PC-9 (cell line): ENCODE measurements at regions of chr12 and their contacts with region 1.

Region 1: DNA sequence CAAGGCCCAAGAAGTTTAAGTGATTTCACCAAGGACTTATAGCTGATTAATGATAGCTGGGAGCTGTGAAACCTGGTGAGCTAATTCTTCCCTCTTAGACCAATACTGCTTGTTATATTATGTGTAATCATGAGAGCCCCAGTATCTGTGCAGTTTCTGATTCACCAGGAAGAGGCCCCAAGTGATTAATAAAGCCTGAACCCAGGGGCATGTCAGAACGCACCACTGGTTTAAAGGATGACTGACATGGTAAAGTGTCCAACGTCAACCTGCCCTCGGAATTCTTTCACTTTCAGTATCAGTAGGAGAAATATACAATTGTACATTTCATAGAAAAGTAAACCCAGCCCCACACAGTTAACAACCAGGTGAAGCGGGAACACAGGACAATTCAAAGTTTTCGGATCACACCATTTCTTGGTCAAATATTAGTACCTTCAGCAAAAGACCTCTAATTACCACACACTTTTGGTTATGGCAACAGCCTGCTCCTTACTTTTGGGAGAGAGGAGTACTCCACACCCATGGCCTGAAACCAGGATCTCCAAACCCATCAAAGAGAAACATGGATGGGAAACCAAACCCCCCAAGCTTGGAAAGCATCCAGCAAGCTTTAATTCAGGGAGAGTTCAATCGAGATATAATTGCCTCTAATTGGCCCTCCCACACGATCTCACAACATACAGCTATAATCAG is 28.5 kb downstream of the TMCC3 start:
- DNase-seq: peak; percentile 42 to 93
- H3K4me3 ChIP-seq: peak overlapping the region; percentile 51
- H3K27ac ChIP-seq: peak overlapping the region; percentile 86
- H3K4me1 ChIP-seq: peaks cover 57% of the 10 kb centered on the region
- H3K27me3 ChIP-seq: no peaks in the 10 kb centered on the region
- CTCF ChIP-seq: no peak

Region 2: GRCh38 chr12:94636462-94637085 is 14.8 kb after region 1 on chr12:
- CTCF ChIA-PET with region 1: interaction called, 3 read pairs
- POLR2A ChIA-PET with region 1: interaction called, 12 read pairs
- intact Hi-C with region 1: no loop called
- DNase-seq: no peak
- H3K4me3 ChIP-seq: no peak overlapping the region
- H3K27ac ChIP-seq: no peak overlapping the region
- H3K4me1 ChIP-seq: peaks cover 6% of the 10 kb centered on the region; the same call in 1 of the 2 replicates
- H3K27me3 ChIP-seq: no peaks in the 10 kb centered on the region
- CTCF ChIP-seq: no peak

Region 3: GRCh38 chr12:94644141-94644979 is 22.5 kb after region 1 on chr12:
- CTCF ChIA-PET with region 1: no interaction called
- POLR2A ChIA-PET with region 1: interaction called, 6 read pairs
- intact Hi-C with region 1: loop called (anchors 1 kb)
- DNase-seq: peak; percentile 57 to 94
- H3K4me3 ChIP-seq: peak overlapping the region; percentile 45; the same call in 1 of the 2 replicates
- H3K27ac ChIP-seq: peak overlapping the region; percentile 94
- H3K4me1 ChIP-seq: peaks cover 67% of the 10 kb centered on the region
- H3K27me3 ChIP-seq: no peaks in the 10 kb centered on the region
- CTCF ChIP-seq: no peak

Region 4: GRCh38 chr12:94994312-94994711 is 372.5 kb after region 1 on chr12:
- CTCF ChIA-PET with region 1: no interaction called
- POLR2A ChIA-PET with region 1: no interaction called
- intact Hi-C with region 1: no loop called
- DNase-seq: peak; percentile 35 to 43
- H3K4me3 ChIP-seq: no peak overlapping the region
- H3K27ac ChIP-seq: 0 out of 2 replicates have a peak overlapping the region, but pooled peaks have one; percentile 8
- H3K4me1 ChIP-seq: peaks cover 14% of the 10 kb centered on the region
- H3K27me3 ChIP-seq: no peaks in the 10 kb centered on the region
- CTCF ChIP-seq: no peak